IMR-90 (cell line): ENCODE measurements at regions of chr2 and their contacts with region 1.

Region 1: DNA sequence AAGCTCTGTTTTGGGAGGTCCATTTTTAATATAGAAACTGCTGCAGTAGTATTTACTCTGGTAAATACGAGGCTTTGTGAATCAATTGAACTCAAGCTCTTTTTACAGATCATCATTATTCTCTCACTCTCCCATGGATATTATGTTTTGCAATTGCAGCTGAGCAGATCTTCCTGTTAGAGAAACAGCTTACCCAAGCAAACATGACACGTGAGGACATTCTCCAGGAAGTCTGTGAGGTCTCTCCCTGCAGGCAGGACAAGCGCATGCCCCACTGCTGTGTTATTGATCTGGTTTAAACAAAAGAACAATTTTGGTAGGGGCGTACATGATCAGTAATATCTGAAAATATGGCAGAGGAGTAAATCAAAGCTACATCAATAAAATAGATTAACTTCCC is 72.1 kb downstream of the COL6A3 start:
- DNase-seq: peak; percentile 52
- ATAC-seq: no peak
- H3K4me3 ChIP-seq: no peak overlapping the region
- H3K27ac ChIP-seq: peak overlapping the region; percentile 4; the same call in 1 of the 2 replicates
- H3K4me1 ChIP-seq: peaks cover 10% of the 10 kb centered on the region; the same call in 1 of the 2 replicates
- H3K27me3 ChIP-seq: no peaks in the 10 kb centered on the region
- CTCF ChIP-seq: no peak
- POLR2A ChIP-seq: no peak
- RAD21 ChIP-seq: no peak

Region 2: DNA sequence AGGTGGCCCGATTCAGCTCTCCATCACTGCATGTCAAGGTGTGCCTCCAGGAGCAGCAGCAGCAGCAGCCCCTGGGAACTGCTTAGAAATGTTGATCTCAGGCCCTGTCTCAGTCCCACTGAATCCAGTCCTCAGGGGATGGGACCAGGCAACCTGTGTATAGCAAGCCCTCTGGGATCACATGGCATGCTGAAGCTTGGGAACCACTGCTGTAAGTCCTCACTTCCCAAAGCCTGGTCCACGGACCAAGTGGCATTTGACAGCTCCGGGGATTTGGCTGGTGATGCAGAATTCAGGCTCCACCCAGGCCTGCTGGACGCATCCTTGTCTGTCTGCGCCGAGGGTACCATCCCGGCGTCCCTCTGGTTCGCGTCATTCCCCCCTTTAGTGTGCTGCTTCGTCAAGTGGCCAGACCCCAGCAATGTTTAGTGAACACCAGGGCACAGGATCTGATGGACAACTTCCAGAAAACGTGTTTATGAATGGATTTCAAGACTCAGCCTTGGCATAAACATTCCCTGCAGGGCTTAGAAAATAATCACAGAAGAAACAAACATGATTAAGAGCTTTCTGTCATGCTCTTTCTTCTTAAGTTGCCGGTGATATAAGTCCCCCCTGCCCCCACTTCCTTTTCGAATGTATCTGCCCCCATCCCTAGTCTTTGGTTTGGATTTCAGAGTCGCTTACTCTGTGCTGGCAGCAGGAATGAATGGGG is 1407.7 kb before region 1 on chr2:
- CTCF ChIA-PET with region 1: no interaction called
- POLR2A ChIA-PET with region 1: interaction called, 13 read pairs
- dilution Hi-C with region 1: no loop called
- in situ Hi-C with region 1: no loop called
- intact Hi-C with region 1: no loop called
- DNase-seq: peak; percentile 50
- ATAC-seq: peak; percentile 79
- H3K4me3 ChIP-seq: no peak overlapping the region
- H3K27ac ChIP-seq: no peak overlapping the region
- H3K4me1 ChIP-seq: peaks cover 9% of the 10 kb centered on the region
- H3K27me3 ChIP-seq: no peaks in the 10 kb centered on the region
- CTCF ChIP-seq: no peak
- POLR2A ChIP-seq: no peak
- RAD21 ChIP-seq: no peak

Region 3: DNA sequence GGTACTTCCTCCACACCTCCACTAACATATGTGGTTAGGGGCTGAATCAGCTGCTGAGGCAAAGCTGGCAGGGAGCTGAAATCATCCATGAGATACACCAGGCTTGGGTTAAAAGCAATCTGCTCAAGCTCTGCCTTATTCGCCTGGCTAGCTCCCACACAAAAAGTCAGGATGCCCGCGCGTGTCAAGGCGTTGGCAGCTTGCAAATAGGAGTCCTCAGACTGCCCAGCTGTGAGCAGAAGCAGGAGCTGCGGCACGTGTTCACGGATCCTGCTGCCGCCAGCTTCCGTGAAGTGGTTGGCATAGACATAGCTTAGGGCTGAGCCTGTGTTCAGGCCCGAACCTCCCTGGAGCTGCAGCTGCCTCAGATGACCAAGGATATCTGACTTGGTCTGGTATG is 36.8 kb after region 1 on chr2:
- CTCF ChIA-PET with region 1: no interaction called
- POLR2A ChIA-PET with region 1: no interaction called
- dilution Hi-C with region 1: no loop called
- in situ Hi-C with region 1: no loop called
- intact Hi-C with region 1: no loop called
- DNase-seq: no peak
- ATAC-seq: no peak
- H3K4me3 ChIP-seq: no peak overlapping the region
- H3K27ac ChIP-seq: peak overlapping the region; percentile 51; the same call in 1 of the 2 replicates
- H3K4me1 ChIP-seq: peaks cover 3% of the 10 kb centered on the region; the same call in 1 of the 2 replicates
- H3K27me3 ChIP-seq: no peaks in the 10 kb centered on the region
- CTCF ChIP-seq: no peak
- POLR2A ChIP-seq: no peak
- RAD21 ChIP-seq: no peak

Region 4: DNA sequence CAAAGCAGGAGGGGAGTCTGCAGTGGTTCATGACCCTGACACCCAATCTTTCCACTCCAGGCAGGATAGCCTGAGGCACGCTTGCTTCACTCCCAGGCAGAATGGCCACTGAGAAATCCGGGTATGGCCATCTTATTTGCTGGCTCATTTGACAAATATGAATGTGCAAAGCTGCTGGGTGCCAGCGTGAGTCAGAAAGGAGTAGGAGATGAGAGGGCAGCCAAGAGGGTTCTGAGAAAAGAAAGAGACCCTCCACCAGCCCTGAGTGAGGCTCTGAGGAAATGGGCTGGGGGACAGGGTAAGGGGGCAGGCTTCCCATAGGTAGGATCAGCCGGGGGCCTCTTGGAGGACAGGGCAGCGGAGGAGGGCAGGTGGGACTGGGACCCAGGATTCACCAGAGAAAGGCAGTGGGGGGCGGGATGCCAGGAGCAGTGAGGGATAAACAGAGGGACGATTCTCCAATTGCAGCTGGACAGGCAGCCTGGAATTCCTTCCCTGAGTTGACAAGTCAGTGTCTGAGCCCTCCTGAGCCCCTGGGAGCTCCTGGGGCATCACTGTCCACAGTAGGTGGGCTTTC is 532.8 kb after region 1 on chr2:
- CTCF ChIA-PET with region 1: no interaction called
- POLR2A ChIA-PET with region 1: no interaction called
- dilution Hi-C with region 1: no loop called
- in situ Hi-C with region 1: no loop called
- intact Hi-C with region 1: no loop called
- DNase-seq: peak; percentile 76
- ATAC-seq: peak; percentile 75
- H3K4me3 ChIP-seq: no peak overlapping the region
- H3K27ac ChIP-seq: no peak overlapping the region
- H3K4me1 ChIP-seq: peaks cover 39% of the 10 kb centered on the region
- H3K27me3 ChIP-seq: no peaks in the 10 kb centered on the region
- CTCF ChIP-seq: no peak
- POLR2A ChIP-seq: no peak
- RAD21 ChIP-seq: no peak